Activated CD8-positive, alpha-beta T cell treated with anti-CD3 and anti-CD28 coated beads for 36 hours (primary cell): ENCODE measurements at regions of chr3 and their contacts with region 1.

Region 1: GRCh38 chr3:128123538-128124368 is at the start of gene RUVBL1:
- DNase-seq: peak; percentile 99
- ATAC-seq: peak; percentile 99
- H3K4me3 Mint-ChIP-seq: peak within 1 kb of the TSS; percentile 99
- H3K27ac Mint-ChIP-seq: peak within 1 kb of the TSS; percentile 94
- H3K4me1 Mint-ChIP-seq: peaks cover 22% of the 10 kb centered on the region
- H3K27me3 Mint-ChIP-seq: no peaks in the 10 kb centered on the region
- CTCF ChIP-seq: no peak
- total RNA-seq, gene RUVBL1: 99.0 to 99.5 TPM

Region 2: GRCh38 chr3:127953091-127954035 is 170.4 kb before region 1 on chr3:
- CTCF ChIA-PET with region 1: no interaction called
- POLR2A ChIA-PET with region 1: no interaction called
- intact Hi-C with region 1: no loop called
- DNase-seq: no peak
- ATAC-seq: no peak
- H3K4me3 Mint-ChIP-seq: no peak overlapping the region
- H3K27ac Mint-ChIP-seq: no peak overlapping the region
- H3K4me1 Mint-ChIP-seq: no peaks in the 10 kb centered on the region
- H3K27me3 Mint-ChIP-seq: peaks cover 11% of the 10 kb centered on the region
- CTCF ChIP-seq: no peak

Region 3: DNA sequence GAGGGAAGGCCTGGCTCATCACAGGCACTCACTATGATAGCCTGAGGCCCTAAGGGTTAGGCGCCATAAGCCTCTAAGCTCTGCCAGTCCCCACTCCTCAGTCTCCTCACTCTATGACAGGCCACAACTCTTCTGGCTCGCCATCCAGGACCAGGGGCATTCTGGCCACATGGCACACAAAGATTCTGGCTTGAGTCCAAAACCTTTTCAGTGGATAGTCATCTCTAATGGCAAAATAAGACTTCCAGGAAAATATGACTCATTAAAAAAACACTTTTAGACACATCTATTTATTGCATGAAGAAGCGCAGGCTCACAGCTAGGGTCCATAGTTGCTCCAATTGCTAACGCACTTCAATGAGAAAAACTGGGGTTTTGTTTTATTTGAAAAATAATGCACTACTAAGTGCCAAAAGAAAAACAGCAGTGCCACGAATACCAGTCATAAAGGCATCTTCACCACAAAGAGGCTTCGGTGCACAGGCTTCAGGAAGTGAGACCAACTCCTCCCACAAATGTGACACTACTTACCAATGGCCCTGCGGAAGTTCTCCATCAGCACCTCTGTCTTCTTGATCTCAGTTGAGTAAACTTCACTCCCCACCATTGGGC is 11.3 kb before region 1 on chr3:
- CTCF ChIA-PET with region 1: interaction called, 5 read pairs
- POLR2A ChIA-PET with region 1: interaction called, 30 read pairs
- intact Hi-C with region 1: no loop called
- DNase-seq: peak; percentile 70
- ATAC-seq: peak; percentile 97
- H3K4me3 Mint-ChIP-seq: peak overlapping the region; percentile 18
- H3K27ac Mint-ChIP-seq: peak overlapping the region; percentile 97
- H3K4me1 Mint-ChIP-seq: peaks cover 44% of the 10 kb centered on the region
- H3K27me3 Mint-ChIP-seq: no peaks in the 10 kb centered on the region
- CTCF ChIP-seq: no peak

Region 4: DNA sequence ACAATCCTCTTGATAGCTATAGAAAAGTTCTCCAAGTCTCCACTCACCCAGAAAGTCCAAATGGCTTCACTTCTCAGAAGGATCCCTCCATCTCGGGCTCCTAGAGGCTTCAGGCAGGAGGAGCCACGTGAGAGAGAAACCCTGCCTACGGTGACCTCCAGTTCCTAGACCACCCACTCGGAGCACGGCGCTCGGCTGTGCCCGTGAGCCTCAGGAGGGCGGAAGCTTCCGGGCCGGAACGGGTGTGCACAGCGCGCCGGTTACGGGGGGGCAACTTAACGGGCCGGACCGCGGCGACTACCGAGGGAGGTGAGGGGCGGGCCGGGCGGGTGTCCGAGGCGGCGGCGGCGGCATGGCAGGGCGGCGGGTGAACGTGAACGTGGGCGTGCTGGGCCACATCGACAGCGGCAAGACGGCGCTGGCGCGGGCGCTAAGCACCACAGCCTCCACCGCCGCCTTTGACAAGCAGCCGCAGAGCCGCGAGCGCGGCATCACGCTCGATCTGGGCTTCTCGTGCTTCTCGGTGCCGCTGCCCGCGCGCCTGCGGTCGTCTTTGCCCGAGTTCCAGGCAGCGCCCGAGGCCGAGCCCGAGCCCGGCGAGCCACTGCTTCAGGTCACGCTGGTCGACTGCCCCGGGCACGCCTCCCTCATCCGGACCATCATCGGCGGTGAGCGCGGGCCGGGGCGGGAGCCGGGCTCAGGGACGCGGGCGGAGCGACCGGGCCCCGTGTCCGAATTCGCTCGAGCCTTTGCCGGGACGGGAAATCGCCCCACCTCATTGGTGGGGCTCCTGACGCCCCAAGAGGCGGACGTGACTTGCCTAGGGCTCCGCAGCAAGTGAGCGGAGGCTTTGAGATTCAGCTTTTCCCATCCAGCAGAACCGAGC is 29.6 kb after region 1 on chr3 and contains the start of gene EEFSEC:
- CTCF ChIA-PET with region 1: interaction called, 3 read pairs
- POLR2A ChIA-PET with region 1: interaction called, 20 read pairs
- intact Hi-C with region 1: no loop called
- DNase-seq: peak; percentile 85
- ATAC-seq: peak; percentile 94
- H3K4me3 Mint-ChIP-seq: peak within 1 kb of the TSS; percentile 80
- H3K27ac Mint-ChIP-seq: peak within 1 kb of the TSS; percentile 97
- H3K4me1 Mint-ChIP-seq: peaks cover 12% of the 10 kb centered on the region
- H3K27me3 Mint-ChIP-seq: no peaks in the 10 kb centered on the region
- CTCF ChIP-seq: no peak
- total RNA-seq, gene EEFSEC: 19.2 to 19.6 TPM